ENCODE measurements at regions of chr19 and their contacts with region 1.

Region 1: GRCh38 chr19:29587518-29587986 is 18.5 kb upstream of the POP4 start:
- DNase-seq: peak; percentile 87
- ATAC-seq: peak; percentile 99
- H3K4me3 Mint-ChIP-seq: no peak overlapping the region
- H3K27ac Mint-ChIP-seq: peak overlapping the region; percentile 89
- H3K4me1 Mint-ChIP-seq: peaks cover 30% of the 10 kb centered on the region
- H3K27me3 Mint-ChIP-seq: peaks cover 27% of the 10 kb centered on the region

Region 2: DNA sequence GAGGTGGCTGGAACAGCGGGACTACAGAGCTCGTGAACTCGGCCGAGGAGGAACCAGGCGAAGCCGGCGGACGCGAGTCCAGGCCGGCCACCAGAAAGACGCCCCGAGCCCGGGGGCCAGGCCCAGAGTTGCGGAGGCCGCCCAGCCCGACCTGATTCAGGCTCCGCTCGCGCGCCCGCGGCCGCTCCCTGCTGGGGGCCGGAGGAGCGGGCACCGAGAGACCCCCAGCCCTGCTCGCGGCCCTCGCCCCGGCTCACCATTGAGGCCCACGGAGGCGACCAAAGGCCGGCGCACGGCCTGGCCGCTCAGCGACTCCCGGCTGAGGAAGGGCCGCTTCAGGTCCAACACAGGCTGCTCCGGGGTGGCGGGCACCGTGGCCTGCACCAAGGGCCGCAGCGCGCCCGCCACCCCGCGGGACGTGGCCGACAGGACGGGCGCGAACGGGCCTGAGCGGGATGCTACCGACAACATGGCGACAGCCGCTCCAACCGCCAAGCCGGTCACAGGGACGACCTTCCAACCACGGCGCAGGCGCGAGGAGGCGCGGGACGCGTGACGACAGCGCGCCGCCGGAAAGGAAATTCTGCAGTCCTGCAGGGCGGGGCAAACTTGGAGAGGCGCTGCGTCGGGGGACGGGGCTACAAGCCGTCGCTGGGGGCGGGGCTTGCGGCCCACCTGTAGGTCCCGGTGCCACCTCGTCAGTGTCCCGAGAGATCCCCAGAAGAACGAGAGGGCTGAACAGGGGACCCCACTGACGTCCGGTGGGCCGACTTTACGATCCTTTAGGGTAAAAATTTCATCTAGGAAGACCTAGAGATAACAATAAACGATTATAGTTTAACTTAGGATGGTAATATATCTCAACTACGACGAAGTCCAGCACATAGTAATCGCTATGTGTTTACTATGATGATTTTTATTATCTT is 374.6 kb before region 1 on chr19 and contains the start of gene UQCRFS1:
- CTCF ChIA-PET with region 1: no interaction called
- POLR2A ChIA-PET with region 1: no interaction called
- intact Hi-C with region 1: loop called in 1 of 2 experiments (anchors 2 kb)
- DNase-seq: peak; percentile 98
- ATAC-seq: peak; percentile 98
- H3K4me3 Mint-ChIP-seq: peak within 1 kb of the TSS; percentile 95
- H3K27ac Mint-ChIP-seq: peak within 1 kb of the TSS; percentile 95
- H3K4me1 Mint-ChIP-seq: peaks cover 48% of the 10 kb centered on the region
- H3K27me3 Mint-ChIP-seq: peaks cover 3% of the 10 kb centered on the region
- total RNA-seq, gene UQCRFS1: 39.1 to 45.3 TPM

Region 3: DNA sequence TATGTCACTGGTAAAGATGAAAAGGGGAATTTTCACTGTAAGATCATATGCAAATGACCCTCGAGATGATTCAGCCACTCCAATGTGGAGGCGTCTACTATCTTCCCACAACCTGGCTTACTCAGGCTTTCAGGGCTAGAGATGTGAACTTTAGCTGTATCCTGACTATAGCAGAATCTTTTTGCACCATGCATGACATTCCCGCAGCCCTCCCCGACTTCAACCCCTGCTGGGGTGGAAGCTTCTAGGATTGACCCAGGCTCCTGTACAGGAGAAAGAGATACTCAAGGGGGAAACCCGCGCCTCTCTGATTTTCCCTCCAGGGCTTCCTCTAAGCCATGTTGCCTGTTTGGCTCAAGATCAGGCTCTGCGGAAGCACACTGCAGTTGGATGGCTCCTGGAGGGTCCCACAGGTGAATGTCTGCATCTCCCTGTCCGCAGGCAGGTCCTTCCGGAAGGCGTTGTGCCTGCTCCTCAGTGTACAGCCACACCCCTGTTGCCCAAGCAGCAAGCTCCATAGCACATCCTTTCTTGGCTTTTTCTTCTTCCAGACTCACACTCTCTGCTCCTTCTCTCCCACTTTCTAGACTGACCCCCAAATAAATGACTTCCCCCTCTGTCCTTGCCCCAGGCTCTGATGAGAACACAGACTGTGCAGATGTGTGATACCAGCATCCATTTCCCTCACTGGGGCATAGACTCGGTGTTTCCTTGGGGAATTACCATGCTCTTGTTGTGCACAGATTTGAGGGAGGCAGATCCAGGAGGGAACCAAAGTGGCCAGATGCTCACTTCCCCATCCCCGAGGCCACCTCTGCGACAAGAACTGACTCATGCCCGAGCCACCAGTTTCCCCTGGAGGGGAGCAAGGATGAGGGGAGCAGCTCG is 10.5 kb before region 1 on chr19:
- CTCF ChIA-PET with region 1: interaction called, 15 read pairs
- POLR2A ChIA-PET with region 1: no interaction called
- intact Hi-C with region 1: loop called (anchors 1 kb)
- DNase-seq: peak; percentile 70
- ATAC-seq: peak; percentile 98
- H3K4me3 Mint-ChIP-seq: no peak overlapping the region
- H3K27ac Mint-ChIP-seq: no peak overlapping the region
- H3K4me1 Mint-ChIP-seq: peaks cover 26% of the 10 kb centered on the region
- H3K27me3 Mint-ChIP-seq: peaks cover 59% of the 10 kb centered on the region

Region 4: DNA sequence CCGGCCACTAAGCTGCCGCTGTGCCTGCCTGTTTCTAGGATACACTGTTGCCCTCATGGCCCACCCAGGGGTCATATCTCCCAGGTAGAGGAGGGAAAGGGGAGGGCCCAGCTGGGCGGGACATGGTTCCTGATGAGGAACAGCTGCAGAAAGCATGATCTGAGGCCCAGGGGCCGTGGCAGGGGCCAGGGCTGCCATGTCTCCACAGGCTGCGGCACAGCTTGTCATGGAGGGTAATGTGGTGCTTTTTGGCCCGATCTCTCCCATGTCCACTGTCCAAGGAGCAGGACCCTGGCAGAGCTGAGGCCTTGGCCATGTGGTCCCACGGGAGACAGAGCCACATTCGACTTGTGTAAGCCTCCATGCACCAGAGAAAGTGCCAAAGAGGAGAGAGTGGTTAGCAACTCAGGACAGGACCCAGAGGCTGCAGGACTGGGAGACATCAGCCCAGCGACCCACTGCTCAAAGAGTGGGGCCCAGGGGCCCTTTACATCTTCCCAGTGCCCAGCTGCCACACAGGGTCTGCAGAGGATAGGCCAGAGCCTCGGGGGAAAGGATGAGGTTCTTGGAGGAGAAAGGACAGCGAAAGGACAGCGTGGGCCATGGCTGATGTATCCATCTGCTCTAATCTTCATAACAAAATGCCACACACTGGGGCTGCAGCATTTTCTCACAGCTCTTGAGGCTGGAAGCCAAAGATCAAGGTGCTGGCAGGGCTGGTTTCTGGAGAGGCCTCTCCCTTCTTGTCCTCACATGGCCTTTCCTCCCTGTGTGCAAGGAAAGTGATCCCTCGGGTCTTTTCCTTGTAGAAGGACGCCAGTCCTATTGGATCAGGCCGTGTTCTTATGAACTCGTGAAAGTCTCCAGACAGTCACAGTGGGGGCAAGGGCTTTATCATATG is 30.1 kb after region 1 on chr19:
- CTCF ChIA-PET with region 1: no interaction called
- POLR2A ChIA-PET with region 1: no interaction called
- intact Hi-C with region 1: no loop called
- DNase-seq: no peak
- ATAC-seq: no peak
- H3K4me3 Mint-ChIP-seq: no peak overlapping the region
- H3K27ac Mint-ChIP-seq: peak overlapping the region; percentile 11
- H3K4me1 Mint-ChIP-seq: peaks cover 28% of the 10 kb centered on the region
- H3K27me3 Mint-ChIP-seq: no peaks in the 10 kb centered on the region

Region 5: DNA sequence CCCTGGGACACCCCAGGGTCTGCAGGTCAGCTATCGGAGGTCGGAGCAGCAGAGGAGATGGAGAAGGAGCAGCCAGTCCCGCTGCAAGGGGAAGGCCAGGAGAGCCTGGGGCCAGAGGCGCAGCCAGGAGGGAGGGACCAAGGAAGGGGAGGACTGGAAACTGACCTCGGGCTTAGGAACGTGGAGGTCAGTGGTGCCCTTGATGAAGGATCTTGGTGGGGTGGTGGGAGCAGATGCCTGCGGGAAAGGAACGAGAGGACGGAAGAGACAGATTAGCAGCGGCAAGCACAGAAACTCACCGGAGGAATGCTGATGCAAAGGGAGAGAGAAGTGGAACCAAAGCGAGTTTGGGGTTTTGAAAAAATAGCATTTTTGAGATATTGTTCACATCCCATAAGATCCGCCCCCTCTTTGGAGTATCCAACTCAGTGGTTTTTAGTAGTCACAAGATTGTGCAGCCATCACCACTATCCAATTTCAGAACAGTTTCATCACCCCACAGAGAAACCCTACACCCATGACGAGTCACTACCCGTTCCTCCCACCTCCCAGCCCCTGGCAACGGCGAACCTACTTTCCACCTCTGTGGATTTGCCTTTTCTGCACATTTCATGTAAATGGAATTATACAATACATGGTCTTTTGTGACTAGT is 99.8 kb after region 1 on chr19:
- CTCF ChIA-PET with region 1: no interaction called
- POLR2A ChIA-PET with region 1: no interaction called
- intact Hi-C with region 1: loop called in 1 of 2 experiments (anchors 1 kb)
- DNase-seq: peak; percentile 84
- ATAC-seq: peak; percentile 87
- H3K4me3 Mint-ChIP-seq: no peak overlapping the region
- H3K27ac Mint-ChIP-seq: peak overlapping the region; percentile 86
- H3K4me1 Mint-ChIP-seq: peaks cover 51% of the 10 kb centered on the region
- H3K27me3 Mint-ChIP-seq: no peaks in the 10 kb centered on the region

Region 6: DNA sequence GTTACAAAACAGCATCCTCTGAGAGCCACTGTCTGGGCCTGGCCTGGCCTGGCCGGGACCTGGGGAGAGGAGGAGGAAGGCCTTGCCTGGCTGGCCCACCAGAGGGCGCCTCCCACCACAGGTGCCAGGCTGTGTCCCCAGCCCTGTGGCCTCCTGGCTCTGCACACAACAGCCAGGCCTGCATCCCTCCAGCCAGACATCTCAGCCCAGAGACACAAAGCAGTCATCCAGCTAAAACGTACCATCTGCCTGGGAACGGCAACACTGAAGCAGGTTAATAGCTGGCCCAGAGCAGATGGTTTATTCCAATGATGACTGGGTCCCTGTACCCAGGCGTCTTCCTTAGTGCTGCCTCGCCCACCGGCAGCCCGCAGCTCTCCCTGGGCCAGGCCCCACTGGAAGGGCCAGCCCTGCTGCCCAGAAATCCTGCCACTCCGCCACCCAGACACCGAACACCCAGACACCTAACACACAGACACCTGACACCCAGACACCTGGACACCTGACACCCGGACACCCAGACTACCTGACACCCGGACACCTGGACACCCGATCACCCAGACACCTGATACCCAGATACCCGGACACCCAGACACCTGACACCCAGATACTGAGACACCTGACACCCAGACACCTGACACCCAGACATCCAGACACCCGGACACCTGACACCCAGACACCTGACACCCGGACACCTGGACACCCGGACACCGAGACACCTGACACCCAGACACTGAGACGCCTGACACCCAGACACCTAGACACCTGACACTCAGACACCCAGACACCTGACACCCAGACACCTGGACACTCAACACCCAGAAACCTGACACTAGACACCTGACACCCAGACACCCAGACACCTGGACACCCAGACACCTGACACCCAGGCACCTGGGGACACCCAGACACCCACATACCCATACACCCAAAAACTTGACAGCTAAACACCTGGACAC is 107.4 kb after region 1 on chr19:
- CTCF ChIA-PET with region 1: interaction called, 8 read pairs
- POLR2A ChIA-PET with region 1: no interaction called
- intact Hi-C with region 1: loop called in 1 of 2 experiments (anchors 1 kb)
- DNase-seq: peak; percentile 92
- ATAC-seq: peak; percentile 97
- H3K4me3 Mint-ChIP-seq: no peak overlapping the region
- H3K27ac Mint-ChIP-seq: peak overlapping the region; percentile 53
- H3K4me1 Mint-ChIP-seq: peaks cover 12% of the 10 kb centered on the region
- H3K27me3 Mint-ChIP-seq: no peaks in the 10 kb centered on the region

Region 7: GRCh38 chr19:29837448-29837981 is 250.0 kb after region 1 on chr19:
- CTCF ChIA-PET with region 1: no interaction called
- POLR2A ChIA-PET with region 1: no interaction called
- intact Hi-C with region 1: loop called in 1 of 2 experiments (anchors 5 kb)
- DNase-seq: peak; percentile 76
- ATAC-seq: peak; percentile 81
- H3K4me3 Mint-ChIP-seq: peak overlapping the region; percentile 51
- H3K27ac Mint-ChIP-seq: peak overlapping the region; percentile 99
- H3K4me1 Mint-ChIP-seq: peaks cover 52% of the 10 kb centered on the region
- H3K27me3 Mint-ChIP-seq: no peaks in the 10 kb centered on the region

Region 8: DNA sequence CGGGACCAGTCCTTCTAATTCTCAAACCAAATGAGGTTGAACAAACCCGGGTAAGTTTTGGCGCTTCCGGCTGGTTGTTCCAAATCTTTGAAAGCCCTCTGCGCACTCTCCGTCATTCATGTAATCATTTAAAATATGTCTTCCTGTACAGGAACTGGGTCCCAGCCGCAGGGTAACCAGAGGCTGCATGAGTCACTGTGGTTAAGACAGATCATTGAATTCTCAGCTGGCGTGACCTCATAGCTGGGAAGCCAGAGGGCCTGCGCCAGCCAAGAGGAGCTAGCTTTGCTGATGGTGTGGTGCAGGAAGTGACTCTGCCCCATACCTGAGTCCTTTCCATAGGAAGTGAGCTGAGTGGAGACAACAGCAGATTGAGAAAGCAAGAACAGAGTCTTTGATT is 1626.5 kb after region 1 on chr19:
- CTCF ChIA-PET with region 1: no interaction called
- POLR2A ChIA-PET with region 1: no interaction called
- intact Hi-C with region 1: loop called in 1 of 2 experiments (anchors 5 kb)
- DNase-seq: peak; percentile 96
- ATAC-seq: peak; percentile 94
- H3K4me3 Mint-ChIP-seq: peak overlapping the region; percentile 61
- H3K27ac Mint-ChIP-seq: peak overlapping the region; percentile 99
- H3K4me1 Mint-ChIP-seq: peaks cover 36% of the 10 kb centered on the region
- H3K27me3 Mint-ChIP-seq: no peaks in the 10 kb centered on the region

Measured in activated CD4-positive, alpha-beta T cell treated with anti-CD3 and anti-CD28 coated beads for 36 hours (primary cell).